Activated T-helper 2 cell treated with anti-CD3 and anti-CD28 coated beads, Interferon-gamma antibody, Interleukin-2, Interleukin-4, amounts not matched to agents 10 μg/mL and 5 μg/mL and 100 μg/mL, durations not matched to agents 14 hours and 24 hours and 36 hours (primary cell): ENCODE measurements at regions of chr18 and their contacts with region 1.

Region 1: GRCh38 chr18:50287441-50288347 is at the start of gene CXXC1:
- DNase-seq: peak; percentile 96
- H3K4me3 Mint-ChIP-seq: peak within 1 kb of the TSS; percentile 93
- H3K27ac Mint-ChIP-seq: peak within 1 kb of the TSS; percentile 89
- H3K4me1 Mint-ChIP-seq: peaks cover 20% of the 10 kb centered on the region
- H3K27me3 Mint-ChIP-seq: peaks cover 2% of the 10 kb centered on the region
- total RNA-seq, gene CXXC1: 94.9 and 101 TPM in 2 replicates

Region 2: GRCh38 chr18:48538531-48539405 is 1748.9 kb before region 1 on chr18 and contains the start of gene CTIF:
- intact Hi-C with region 1: loop called (anchors 10 kb)
- DNase-seq: peak; percentile 52
- H3K4me3 Mint-ChIP-seq: peak within 1 kb of the TSS; percentile 85
- H3K27ac Mint-ChIP-seq: no peak within 1 kb of the TSS
- H3K4me1 Mint-ChIP-seq: peaks cover 10% of the 10 kb centered on the region
- H3K27me3 Mint-ChIP-seq: peaks cover 10% of the 10 kb centered on the region
- total RNA-seq, gene CTIF: 7.0 and 7.5 TPM in 2 replicates

Region 3: GRCh38 chr18:49486953-49487710 is 800.6 kb before region 1 on chr18 and contains the start of gene C18orf32:
- intact Hi-C with region 1: loop called (anchors 10 kb)
- DNase-seq: peak; percentile 91
- H3K4me3 Mint-ChIP-seq: peak within 1 kb of the TSS; percentile 98
- H3K27ac Mint-ChIP-seq: peak within 1 kb of the TSS; percentile 98
- H3K4me1 Mint-ChIP-seq: peaks cover 44% of the 10 kb centered on the region
- H3K27me3 Mint-ChIP-seq: no peaks in the 10 kb centered on the region
- total RNA-seq, gene C18orf32: 21.7 and 22.6 TPM in 2 replicates

Region 4: GRCh38 chr18:50240083-50240563 is 47.6 kb before region 1 on chr18:
- intact Hi-C with region 1: loop called (anchors 1 kb)
- DNase-seq: peak; percentile 16
- H3K4me3 Mint-ChIP-seq: no peak overlapping the region
- H3K27ac Mint-ChIP-seq: no peak overlapping the region
- H3K4me1 Mint-ChIP-seq: peaks cover 8% of the 10 kb centered on the region
- H3K27me3 Mint-ChIP-seq: peaks cover 1% of the 10 kb centered on the region

Region 5: DNA sequence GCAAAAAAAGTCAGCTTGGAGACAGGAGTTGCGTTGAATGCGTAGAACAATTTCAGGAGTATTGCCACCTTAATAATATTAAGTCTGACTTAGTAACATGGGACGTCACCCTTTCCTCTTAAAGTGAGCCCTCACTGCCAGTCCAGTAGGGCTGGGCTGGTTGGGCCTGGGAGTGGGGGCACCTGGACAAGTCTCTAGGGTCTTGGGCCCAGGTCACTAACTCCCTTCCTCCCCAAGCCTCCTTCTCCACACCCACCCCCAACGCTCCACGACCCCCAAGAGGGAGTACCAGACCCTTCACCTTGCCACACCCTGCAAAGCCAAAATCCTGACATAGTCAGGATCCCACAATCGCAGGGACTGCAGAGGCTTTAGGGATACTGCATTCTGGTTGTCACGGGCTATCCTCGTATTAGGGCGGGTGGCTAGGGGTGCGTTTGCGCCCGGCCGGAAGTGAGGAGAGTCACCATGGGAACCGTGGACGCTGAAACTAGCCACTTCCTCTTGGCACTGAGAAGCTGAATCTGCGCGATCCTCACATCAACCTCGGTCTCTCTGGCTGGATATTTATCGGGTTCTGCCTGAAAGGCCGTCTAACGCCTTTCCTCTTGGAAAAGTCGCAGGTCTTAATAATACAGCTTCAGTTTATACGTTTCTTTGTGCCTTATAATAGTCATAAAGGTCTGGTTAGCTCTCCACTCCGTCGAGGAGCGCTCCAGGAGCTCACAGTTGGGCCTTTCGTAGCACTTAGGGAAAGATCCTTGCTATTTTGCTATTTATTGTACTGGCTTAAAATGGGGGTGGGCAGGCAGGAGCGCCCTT is 10.1 kb after region 1 on chr18:
- intact Hi-C with region 1: loop called (anchors 1 kb)
- DNase-seq: peak; percentile 72
- H3K4me3 Mint-ChIP-seq: peak overlapping the region; percentile 62
- H3K27ac Mint-ChIP-seq: no peak overlapping the region
- H3K4me1 Mint-ChIP-seq: peaks cover 12% of the 10 kb centered on the region
- H3K27me3 Mint-ChIP-seq: peaks cover 31% of the 10 kb centered on the region

Region 6: DNA sequence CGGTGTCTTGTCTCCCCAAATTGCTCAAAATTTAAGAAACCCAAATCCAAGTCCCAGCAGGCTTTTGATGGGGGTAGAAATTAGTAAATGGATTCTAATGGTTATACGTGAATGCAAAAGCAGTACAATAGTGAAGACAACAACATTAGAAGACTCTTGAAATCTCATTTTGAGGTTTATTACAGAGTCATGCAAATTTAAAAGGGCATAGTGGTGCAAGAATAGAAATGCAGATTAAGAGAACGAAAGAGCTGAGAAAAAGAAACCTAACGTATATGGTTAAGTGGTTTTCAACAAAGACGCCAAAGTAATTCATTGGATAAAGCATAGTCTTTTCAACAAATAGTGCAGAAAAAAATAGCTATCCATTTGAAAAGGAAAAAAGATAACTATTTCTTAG is 33.0 kb after region 1 on chr18:
- intact Hi-C with region 1: loop called (anchors 5 kb)
- DNase-seq: no peak
- H3K4me3 Mint-ChIP-seq: peak overlapping the region; percentile 59
- H3K27ac Mint-ChIP-seq: peak overlapping the region; percentile 75
- H3K4me1 Mint-ChIP-seq: peaks cover 26% of the 10 kb centered on the region
- H3K27me3 Mint-ChIP-seq: peaks cover 3% of the 10 kb centered on the region

Region 7: GRCh38 chr18:50374753-50375391 is 87.2 kb after region 1 on chr18 and contains the start of gene SKA1:
- intact Hi-C with region 1: loop called (anchors 1 kb)
- DNase-seq: peak; percentile 87
- H3K4me3 Mint-ChIP-seq: peak within 1 kb of the TSS; percentile 87
- H3K27ac Mint-ChIP-seq: peak within 1 kb of the TSS; percentile 86
- H3K4me1 Mint-ChIP-seq: peaks cover 13% of the 10 kb centered on the region
- H3K27me3 Mint-ChIP-seq: peaks cover 4% of the 10 kb centered on the region
- total RNA-seq, gene SKA1: 23.5 and 23.6 TPM in 2 replicates